Activated CD8-positive, alpha-beta T cell treated with anti-CD3 and anti-CD28 coated beads, Interleukin-2, amount 10 ng/mL, durations not matched to agents 7 days and 5 days (primary cell): ENCODE measurements at regions of chr2 and their contacts with region 1.

Region 1: DNA sequence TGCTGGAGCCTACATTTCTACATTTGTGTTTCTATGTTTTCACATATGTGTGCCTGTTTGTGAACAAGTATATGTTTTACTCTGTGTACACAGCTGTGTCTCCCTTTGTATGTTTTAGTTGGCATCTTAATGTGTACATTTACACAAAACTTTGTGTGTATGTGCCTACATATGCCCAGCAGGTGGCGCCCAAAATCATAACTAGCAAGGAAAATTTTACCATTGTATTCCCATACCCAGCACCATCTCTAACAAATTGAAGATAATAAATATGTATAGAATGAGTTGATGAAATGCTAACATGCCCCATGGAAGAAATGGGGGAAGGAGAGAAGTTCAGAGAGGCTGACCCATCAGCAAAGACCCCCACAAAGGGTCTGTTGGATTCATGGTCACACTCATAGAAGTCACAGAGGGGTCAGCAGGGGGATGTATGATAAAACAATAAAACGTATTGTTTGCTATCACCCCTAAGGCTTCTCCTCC is 48.1 kb downstream of the PKDCC start:
- DNase-seq: peak; percentile 85
- ATAC-seq: peak; percentile 52
- H3K4me3 Mint-ChIP-seq: no peak overlapping the region
- H3K27ac Mint-ChIP-seq: no peak overlapping the region
- H3K4me1 Mint-ChIP-seq: peaks cover 42% of the 10 kb centered on the region
- H3K27me3 Mint-ChIP-seq: peaks cover 14% of the 10 kb centered on the region

Region 2: GRCh38 chr2:41869542-41870264 is 226.3 kb before region 1 on chr2:
- CTCF ChIA-PET with region 1: interaction called, 35 read pairs
- POLR2A ChIA-PET with region 1: no interaction called
- DNase-seq: peak; percentile 77
- ATAC-seq: peak; percentile 84
- H3K4me3 Mint-ChIP-seq: no peak overlapping the region
- H3K27ac Mint-ChIP-seq: no peak overlapping the region
- H3K4me1 Mint-ChIP-seq: peaks cover 6% of the 10 kb centered on the region
- H3K27me3 Mint-ChIP-seq: peaks cover 22% of the 10 kb centered on the region

Region 3: GRCh38 chr2:41907771-41908207 is 188.2 kb before region 1 on chr2:
- CTCF ChIA-PET with region 1: no interaction called
- POLR2A ChIA-PET with region 1: no interaction called
- DNase-seq: no peak
- ATAC-seq: no peak
- H3K4me3 Mint-ChIP-seq: no peak overlapping the region
- H3K27ac Mint-ChIP-seq: no peak overlapping the region
- H3K4me1 Mint-ChIP-seq: peaks cover 4% of the 10 kb centered on the region
- H3K27me3 Mint-ChIP-seq: peaks cover 36% of the 10 kb centered on the region

Region 4: GRCh38 chr2:42132966-42133641 is 37.1 kb after region 1 on chr2:
- CTCF ChIA-PET with region 1: interaction called, 24 read pairs
- POLR2A ChIA-PET with region 1: interaction called, 18 read pairs
- DNase-seq: peak; percentile 96
- ATAC-seq: peak; percentile 92
- H3K4me3 Mint-ChIP-seq: peak overlapping the region; percentile 65
- H3K27ac Mint-ChIP-seq: peak overlapping the region; percentile 95
- H3K4me1 Mint-ChIP-seq: peaks cover 89% of the 10 kb centered on the region
- H3K27me3 Mint-ChIP-seq: no peaks in the 10 kb centered on the region

Region 5: DNA sequence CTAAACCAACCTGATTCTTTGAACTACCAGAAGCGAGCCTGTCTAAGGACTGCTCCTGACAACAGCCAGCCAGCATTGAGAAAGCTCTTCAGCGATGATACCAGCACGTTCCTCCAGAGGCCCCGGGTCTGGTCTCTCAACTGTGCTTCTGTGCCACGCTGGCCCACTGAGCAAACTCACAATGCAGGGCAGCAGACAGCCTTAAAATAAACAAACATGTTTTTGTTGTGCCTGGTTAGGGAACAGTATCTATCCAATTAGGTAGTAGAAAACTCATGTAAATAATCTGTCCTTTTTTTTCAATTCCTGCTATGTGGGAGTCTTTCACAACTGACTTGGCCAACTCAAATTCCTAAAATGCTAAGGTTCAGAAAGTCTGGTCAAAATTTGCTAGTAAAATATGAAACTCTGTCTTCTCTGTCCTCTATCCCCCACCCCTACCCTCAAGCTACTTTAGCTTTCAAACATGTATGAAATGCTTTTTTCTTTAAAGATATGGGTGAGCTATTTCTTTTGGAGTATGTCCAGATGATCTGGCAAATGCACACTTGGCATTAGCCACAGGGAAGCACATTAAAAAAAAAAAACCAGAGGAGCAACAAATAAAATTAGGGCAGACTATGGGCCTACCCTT is 51.8 kb after region 1 on chr2:
- CTCF ChIA-PET with region 1: interaction called, 20 read pairs
- POLR2A ChIA-PET with region 1: no interaction called
- DNase-seq: no peak
- ATAC-seq: no peak
- H3K4me3 Mint-ChIP-seq: no peak overlapping the region
- H3K27ac Mint-ChIP-seq: no peak overlapping the region
- H3K4me1 Mint-ChIP-seq: peaks cover 8% of the 10 kb centered on the region
- H3K27me3 Mint-ChIP-seq: no peaks in the 10 kb centered on the region

Region 6: DNA sequence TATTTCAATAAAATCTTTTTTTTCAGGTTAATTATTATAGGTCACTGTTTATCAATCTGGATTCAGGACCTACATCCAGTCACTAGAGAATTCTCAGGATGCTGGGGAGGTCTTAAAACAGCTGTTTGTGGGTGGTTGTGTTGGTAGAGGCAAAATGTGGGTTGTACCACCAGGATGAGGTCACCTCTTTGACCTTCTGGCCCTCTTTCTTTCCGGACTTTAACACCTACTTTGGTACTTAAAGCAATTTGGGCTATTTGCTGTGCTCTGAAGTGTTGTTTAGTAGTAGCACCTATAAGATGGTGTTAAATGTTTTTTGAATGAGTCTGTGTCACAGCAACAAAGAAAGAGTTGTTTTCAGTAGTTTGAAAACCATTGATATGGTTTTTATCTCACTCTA is 87.8 kb after region 1 on chr2:
- CTCF ChIA-PET with region 1: interaction called, 23 read pairs
- POLR2A ChIA-PET with region 1: no interaction called
- DNase-seq: no peak
- ATAC-seq: no peak
- H3K4me3 Mint-ChIP-seq: no peak overlapping the region
- H3K27ac Mint-ChIP-seq: no peak overlapping the region
- H3K4me1 Mint-ChIP-seq: peaks cover 46% of the 10 kb centered on the region
- H3K27me3 Mint-ChIP-seq: no peaks in the 10 kb centered on the region

Region 7: GRCh38 chr2:42238644-42239288 is 142.8 kb after region 1 on chr2:
- CTCF ChIA-PET with region 1: interaction called, 15 read pairs
- POLR2A ChIA-PET with region 1: interaction called, 4 read pairs
- DNase-seq: peak; percentile 37
- ATAC-seq: peak; percentile 71
- H3K4me3 Mint-ChIP-seq: no peak overlapping the region
- H3K27ac Mint-ChIP-seq: no peak overlapping the region
- H3K4me1 Mint-ChIP-seq: peaks cover 12% of the 10 kb centered on the region
- H3K27me3 Mint-ChIP-seq: no peaks in the 10 kb centered on the region